ENCODE measurements at regions of chr21 and their contacts with region 1.

Region 1: DNA sequence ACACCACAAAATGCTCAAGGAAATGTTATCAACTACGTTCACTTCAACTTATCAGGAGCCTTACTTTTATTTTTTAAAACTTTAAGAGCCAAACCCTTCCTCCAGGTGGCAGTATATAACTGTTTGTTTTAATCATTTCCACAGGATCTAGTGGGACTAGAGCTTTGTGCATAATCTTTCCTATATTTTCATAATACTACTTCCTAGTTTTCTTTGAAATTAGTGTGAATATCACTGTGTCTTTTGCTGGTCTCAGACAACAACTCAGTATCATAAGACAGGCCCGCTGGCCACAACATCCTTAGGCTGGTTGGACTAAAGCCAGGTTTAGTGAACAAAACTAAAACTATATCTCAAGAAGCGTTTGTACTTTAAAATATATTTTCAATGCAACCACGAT is 145.5 kb downstream of the TIAM1 start:
- DNase-seq: peak; percentile 67
- H3K4me3 Mint-ChIP-seq: no peak overlapping the region
- H3K27ac Mint-ChIP-seq: no peak overlapping the region
- H3K4me1 Mint-ChIP-seq: peaks cover 4% of the 10 kb centered on the region
- H3K27me3 Mint-ChIP-seq: no peaks in the 10 kb centered on the region
- CTCF ChIP-seq: peak; percentile 60

Region 2: DNA sequence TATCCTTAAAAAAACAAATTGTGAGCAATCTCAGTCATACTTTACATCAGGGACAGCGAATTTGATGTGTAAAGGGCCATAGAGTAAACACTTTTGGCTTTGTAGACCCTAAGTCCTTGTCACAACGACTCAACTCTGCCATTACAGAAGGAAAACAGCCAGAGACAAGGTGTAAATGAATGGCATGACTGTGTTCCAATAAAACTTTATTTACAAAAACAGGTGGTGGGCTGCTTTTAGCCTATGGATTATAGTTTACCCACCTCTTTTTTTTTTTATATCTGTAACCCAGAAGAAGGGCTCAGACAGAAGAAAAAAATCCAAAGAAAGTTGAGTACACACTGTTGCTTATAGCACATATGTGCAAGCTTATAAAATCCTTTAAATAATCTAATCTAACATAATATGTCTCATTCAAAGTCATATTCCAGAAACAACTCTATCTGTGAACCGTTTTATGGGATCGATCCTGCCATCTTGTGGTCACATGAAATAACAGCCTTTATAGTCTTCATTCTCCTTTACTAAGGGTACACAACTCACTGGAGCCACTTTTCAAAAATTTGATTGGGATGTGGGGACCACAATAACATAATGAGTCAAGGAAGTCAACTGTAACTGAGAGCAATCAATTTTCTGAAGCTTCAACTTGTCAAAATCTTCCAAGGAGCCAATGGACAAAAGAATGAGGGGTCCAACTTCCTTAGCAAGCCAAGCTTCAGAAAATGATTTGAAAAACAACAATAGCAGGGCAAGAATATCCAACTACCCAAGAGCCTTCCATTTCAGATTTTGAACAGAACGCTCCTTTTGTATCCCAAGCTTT is 18.1 kb before region 1 on chr21:
- CTCF ChIA-PET with region 1: interaction called, 41 read pairs
- POLR2A ChIA-PET with region 1: no interaction called
- intact Hi-C with region 1: no loop called
- DNase-seq: peak; percentile 57
- H3K4me3 Mint-ChIP-seq: no peak overlapping the region
- H3K27ac Mint-ChIP-seq: no peak overlapping the region
- H3K4me1 Mint-ChIP-seq: no peaks in the 10 kb centered on the region
- H3K27me3 Mint-ChIP-seq: no peaks in the 10 kb centered on the region
- CTCF ChIP-seq: peak; percentile 53

Region 3: GRCh38 chr21:31343680-31344480 is 145.3 kb after region 1 on chr21 and contains the start of gene TIAM1:
- CTCF ChIA-PET with region 1: interaction called, 10 read pairs
- POLR2A ChIA-PET with region 1: no interaction called
- intact Hi-C with region 1: loop called (anchors 5 kb)
- DNase-seq: peak; percentile 86
- H3K4me3 Mint-ChIP-seq: peak within 1 kb of the TSS; percentile 96
- H3K27ac Mint-ChIP-seq: peak within 1 kb of the TSS; percentile 92
- H3K4me1 Mint-ChIP-seq: peaks cover 21% of the 10 kb centered on the region
- H3K27me3 Mint-ChIP-seq: no peaks in the 10 kb centered on the region
- CTCF ChIP-seq: no peak
- total RNA-seq, gene TIAM1: 9.0 and 9.8 TPM in 2 replicates

Region 4: GRCh38 chr21:31457675-31458074 is 259.1 kb after region 1 on chr21:
- CTCF ChIA-PET with region 1: interaction called, 7 read pairs
- POLR2A ChIA-PET with region 1: no interaction called
- intact Hi-C with region 1: loop called (anchors 5 kb)
- DNase-seq: peak; percentile 25
- H3K4me3 Mint-ChIP-seq: no peak overlapping the region
- H3K27ac Mint-ChIP-seq: no peak overlapping the region
- H3K4me1 Mint-ChIP-seq: no peaks in the 10 kb centered on the region
- H3K27me3 Mint-ChIP-seq: no peaks in the 10 kb centered on the region
- CTCF ChIP-seq: peak; percentile 15

Region 5: DNA sequence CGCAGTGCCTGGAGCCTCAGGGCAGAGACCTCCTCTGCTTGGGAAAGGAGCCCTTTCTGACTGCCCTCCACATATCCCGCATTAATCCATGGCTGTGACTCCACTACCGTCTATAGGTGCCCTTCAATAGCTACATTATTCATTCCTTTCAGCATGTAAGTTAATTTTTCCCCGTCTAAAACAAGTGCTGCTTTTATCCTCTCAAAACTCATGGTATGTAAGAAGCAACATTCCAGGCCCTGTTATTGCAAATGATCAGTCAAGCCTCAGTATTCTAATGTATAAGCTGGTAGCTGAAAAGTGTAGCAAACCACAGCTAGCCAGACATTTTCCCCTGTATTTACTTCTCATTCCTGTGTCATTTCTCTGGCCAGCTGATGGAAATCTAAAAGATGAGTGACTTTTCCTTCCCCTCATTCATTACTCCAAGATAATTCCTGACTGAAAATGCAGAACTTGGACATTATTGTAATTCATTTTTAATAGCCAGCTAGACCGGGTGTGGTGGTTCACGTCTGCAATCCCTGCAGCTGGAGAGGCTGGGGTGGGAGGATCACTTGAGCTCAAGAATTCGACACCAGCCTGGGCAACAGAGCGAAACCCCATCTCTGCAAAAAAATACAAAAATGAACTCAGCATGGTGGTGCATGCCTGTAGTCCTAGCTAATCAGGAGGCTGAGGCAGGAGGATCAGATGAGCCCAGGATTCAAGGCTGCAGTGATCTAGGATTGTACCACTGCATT is 372.4 kb after region 1 on chr21:
- CTCF ChIA-PET with region 1: interaction called, 11 read pairs
- POLR2A ChIA-PET with region 1: no interaction called
- intact Hi-C with region 1: no loop called
- DNase-seq: no peak
- H3K4me3 Mint-ChIP-seq: no peak overlapping the region
- H3K27ac Mint-ChIP-seq: no peak overlapping the region
- H3K4me1 Mint-ChIP-seq: no peaks in the 10 kb centered on the region
- H3K27me3 Mint-ChIP-seq: no peaks in the 10 kb centered on the region
- CTCF ChIP-seq: no peak

Region 6: DNA sequence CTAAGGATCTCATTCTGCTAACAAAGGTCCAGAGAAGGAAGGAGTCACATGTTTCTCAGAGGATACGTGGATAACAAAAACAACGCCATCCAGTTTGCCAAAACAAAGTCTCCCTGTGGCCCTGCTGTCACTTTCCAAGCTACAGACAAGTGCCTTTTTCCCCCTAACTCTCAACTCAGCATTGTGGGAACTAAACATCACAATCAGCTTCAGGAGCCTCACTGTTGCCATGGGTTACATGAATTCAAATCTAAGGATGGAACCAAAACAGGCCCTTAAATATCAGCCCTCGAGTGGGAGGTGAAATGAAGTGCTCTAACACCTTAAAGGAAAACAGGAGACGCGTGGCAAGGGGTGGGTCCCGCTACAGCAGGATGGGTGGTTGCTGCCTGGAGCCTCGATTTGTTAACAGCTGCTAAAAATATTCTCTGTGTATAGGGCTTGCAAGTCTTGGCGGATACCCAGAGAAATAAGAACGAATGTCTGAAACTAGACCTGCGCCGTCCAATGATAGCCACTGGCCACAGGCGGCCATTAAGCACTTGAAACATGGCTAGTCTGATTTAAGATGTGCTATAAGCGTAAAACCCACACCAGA is 394.5 kb after region 1 on chr21:
- CTCF ChIA-PET with region 1: interaction called, 11 read pairs
- POLR2A ChIA-PET with region 1: no interaction called
- intact Hi-C with region 1: no loop called
- DNase-seq: no peak
- H3K4me3 Mint-ChIP-seq: no peak overlapping the region
- H3K27ac Mint-ChIP-seq: no peak overlapping the region
- H3K4me1 Mint-ChIP-seq: no peaks in the 10 kb centered on the region
- H3K27me3 Mint-ChIP-seq: no peaks in the 10 kb centered on the region
- CTCF ChIP-seq: no peak

Region 7: DNA sequence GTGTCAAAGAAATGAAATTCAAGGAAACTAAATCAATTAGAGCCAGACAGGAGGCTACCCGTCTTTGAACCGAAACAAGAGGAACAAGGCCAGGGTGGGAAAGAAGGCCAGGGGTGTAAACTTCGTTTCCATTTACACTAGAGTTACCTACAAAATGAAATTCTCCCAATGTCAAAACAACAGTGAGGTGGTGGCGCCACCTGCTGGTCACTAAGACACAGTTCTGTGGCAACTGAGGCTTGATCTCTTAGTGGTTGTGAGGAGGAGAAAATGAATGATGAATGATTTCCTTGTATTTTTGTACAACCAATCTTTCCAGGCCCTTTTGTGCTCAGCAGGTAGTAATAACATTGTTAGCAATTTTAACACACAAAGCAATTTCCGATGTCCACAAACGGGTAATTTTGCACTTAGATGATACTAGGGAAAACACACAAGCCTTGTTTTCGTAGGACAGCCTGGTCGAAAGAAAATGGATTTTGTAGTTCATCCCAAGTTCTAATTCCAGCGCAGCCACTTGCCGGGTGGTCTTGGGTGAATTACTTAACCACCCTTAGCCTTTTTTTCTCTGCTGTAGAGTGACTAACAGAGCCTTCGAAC is 406.1 kb after region 1 on chr21:
- CTCF ChIA-PET with region 1: interaction called, 28 read pairs
- POLR2A ChIA-PET with region 1: no interaction called
- intact Hi-C with region 1: loop called (anchors 1 kb)
- DNase-seq: peak; percentile 80
- H3K4me3 Mint-ChIP-seq: no peak overlapping the region
- H3K27ac Mint-ChIP-seq: no peak overlapping the region
- H3K4me1 Mint-ChIP-seq: no peaks in the 10 kb centered on the region
- H3K27me3 Mint-ChIP-seq: no peaks in the 10 kb centered on the region
- CTCF ChIP-seq: peak; percentile 83